Heart right ventricle (tissue), 16 donors: ENCODE measurements at regions of chr6 and their contacts with region 1.

Region 1: GRCh38 chr6:3759646-3760232 is 8.2 kb upstream of the PXDC1 start:
- DNase-seq: no peak
- ATAC-seq: peak in 1 of 8 donors; percentile 14
- H3K4me3 ChIP-seq: no peak overlapping the region
- H3K27ac ChIP-seq: no peak overlapping the region
- H3K4me1 ChIP-seq: no peaks in the 10 kb centered on the region
- H3K27me3 ChIP-seq: no peaks in the 10 kb centered on the region
- CTCF ChIP-seq: no peak

Region 2: GRCh38 chr6:3566812-3567211 is 192.9 kb before region 1 on chr6:
- intact Hi-C with region 1: no loop called
- DNase-seq: no peak
- ATAC-seq: no peak
- H3K4me3 ChIP-seq: no peak overlapping the region
- H3K27ac ChIP-seq: no peak overlapping the region
- H3K4me1 ChIP-seq: peaks cover 0 to 3% (median 0%) of the 10 kb centered on the region in 9 donors
- H3K27me3 ChIP-seq: peaks cover 0 to 10% (median 4%) of the 10 kb centered on the region in 7 donors
- CTCF ChIP-seq: no peak

Region 3: DNA sequence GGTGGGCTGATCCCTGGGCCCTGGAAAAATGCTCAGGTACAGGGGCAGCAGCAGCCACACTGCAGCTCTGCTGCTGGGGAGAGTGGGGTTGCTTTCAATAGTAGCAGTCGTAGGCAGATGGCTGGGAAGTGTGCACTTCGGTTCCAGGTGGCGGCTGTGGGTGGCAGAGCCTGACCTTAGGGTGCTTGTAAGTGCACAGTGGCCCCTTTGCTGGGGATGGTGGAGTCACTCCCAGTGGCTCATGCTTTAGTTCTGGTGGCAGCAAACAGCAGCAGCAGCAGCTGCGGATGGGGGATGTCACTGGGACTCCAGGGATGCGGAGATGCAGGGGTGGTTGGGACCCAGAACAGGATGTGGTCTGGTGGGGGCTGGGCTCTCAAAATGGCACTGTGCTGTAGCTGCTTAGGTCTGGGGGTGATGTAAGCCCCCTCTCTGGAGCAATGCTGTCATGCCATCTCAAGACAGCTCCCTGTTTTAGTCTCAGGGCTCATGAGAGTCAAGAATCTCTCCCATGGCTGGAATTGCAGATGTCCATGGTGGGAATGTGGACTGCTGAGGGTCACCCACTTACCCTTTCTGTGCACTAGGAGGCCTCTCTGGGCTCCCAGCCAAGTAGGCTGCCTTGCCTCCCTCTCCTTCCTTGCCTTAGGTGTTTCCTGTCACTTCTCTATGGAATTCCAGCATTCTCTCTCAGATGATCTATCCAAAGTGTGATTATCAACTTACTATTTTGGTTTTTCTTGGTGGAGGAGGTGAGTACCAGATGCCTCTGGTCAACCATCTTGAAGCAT is 156.2 kb before region 1 on chr6:
- intact Hi-C with region 1: no loop called
- DNase-seq: no peak
- ATAC-seq: no peak
- H3K4me3 ChIP-seq: no peak overlapping the region
- H3K27ac ChIP-seq: no peak overlapping the region
- H3K4me1 ChIP-seq: no peaks in the 10 kb centered on the region
- H3K27me3 ChIP-seq: peaks cover 0 to 4% (median 0%) of the 10 kb centered on the region in 7 donors
- CTCF ChIP-seq: no peak

Region 4: DNA sequence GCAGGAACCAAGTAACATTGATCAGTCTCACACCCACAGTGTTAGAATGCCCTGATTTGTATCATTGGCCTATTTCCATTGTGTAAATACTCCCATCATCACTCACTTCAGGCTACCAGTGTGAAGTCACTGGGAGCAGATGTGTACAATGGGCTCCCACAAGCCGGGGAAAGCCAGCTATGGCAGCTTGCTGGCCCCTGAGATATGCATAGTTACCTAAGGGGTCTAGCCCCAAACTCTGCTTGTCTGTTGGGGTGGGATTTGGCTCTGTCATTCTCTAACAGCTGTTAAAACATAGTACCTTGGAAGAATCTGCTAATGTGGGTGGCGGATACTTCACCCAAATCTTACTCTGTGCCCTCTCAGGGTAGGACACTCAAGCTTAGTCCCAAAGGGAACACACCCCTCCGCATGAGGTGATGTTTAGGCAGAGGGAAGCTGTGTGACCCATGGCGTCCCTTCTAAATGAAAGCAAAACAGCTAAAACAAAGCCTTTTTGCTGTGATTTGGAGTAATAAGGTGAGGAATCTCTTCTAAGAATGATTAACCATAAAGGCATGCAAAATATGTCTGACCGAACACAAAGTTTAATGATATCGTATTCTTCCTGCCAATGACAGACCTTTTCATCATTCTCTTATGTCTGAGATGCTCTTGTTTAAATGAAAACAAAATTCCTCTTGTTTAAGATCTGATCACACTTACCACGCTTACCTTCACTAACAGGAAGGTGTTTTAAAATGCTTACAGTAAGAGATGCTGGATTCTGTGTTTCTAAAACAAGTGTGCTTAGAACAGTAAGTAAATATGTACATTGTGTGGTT is 37.7 kb after region 1 on chr6:
- intact Hi-C with region 1: loop called in 3 of 10 experiments (anchors 5 kb)
- DNase-seq: no peak
- ATAC-seq: no peak
- H3K4me3 ChIP-seq: no peak overlapping the region
- H3K27ac ChIP-seq: peak overlapping the region in 5 of 10 donors; percentile 8 to 61 (median 56)
- H3K4me1 ChIP-seq: peaks cover 6 to 66% (median 35%) of the 10 kb centered on the region in 9 donors
- H3K27me3 ChIP-seq: no peaks in the 10 kb centered on the region
- CTCF ChIP-seq: no peak